Uterus (tissue), 4 donors: ENCODE measurements at regions of chr12 and their contacts with region 1.

Region 1: DNA sequence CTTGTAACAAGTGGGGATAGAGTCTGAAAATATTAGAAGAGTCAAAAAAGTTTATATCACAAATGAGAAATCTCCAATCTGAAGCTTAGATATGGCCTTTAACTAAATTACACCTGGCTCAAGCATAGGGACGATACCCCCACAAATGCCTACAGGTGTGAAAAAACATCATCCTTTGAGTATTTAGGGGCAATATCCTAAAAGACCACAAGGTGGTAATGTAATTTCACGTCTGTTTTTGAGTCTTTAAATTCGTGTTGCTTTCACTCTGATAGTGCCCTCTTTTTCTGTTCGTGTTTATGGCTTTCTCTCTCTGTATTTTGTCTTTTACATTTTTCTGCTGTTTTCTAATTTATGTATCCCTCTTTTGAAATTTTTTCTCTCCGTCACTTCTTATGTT is 84.3 kb downstream of the ETNK1 start:
- DNase-seq: no peak
- H3K4me3 ChIP-seq: no peak overlapping the region
- H3K27ac ChIP-seq: no peak overlapping the region
- H3K4me1 ChIP-seq: no peaks in the 10 kb centered on the region
- H3K27me3 ChIP-seq: no peaks in the 10 kb centered on the region
- CTCF ChIP-seq: peak in 3 of 4 experiments; percentile 9 to 34 (median 30)
- POLR2A ChIP-seq: no peak

Region 2: DNA sequence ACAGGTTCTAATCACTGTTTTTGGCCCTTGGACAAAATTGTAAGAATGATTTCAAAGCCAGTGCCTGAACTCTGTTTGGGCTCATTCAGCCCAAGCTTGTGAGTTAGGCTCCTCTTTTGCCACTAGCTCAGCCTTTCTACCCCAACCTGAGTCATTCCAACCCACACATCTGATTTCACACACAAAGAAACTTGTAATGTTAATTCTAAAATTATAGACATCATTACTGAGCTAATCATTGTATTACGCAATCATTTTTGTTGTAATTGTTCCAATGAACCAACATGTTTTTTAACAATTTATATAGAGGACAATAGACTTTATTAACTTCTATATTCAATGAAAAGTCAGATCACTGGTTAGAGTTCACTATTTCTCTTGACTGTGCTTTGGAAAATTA is 356.8 kb after region 1 on chr12:
- intact Hi-C with region 1: loop called (anchors 10 kb)
- DNase-seq: no peak
- H3K4me3 ChIP-seq: no peak overlapping the region
- H3K27ac ChIP-seq: no peak overlapping the region
- H3K4me1 ChIP-seq: no peaks in the 10 kb centered on the region
- H3K27me3 ChIP-seq: no peaks in the 10 kb centered on the region
- CTCF ChIP-seq: no peak
- POLR2A ChIP-seq: no peak

Region 3: DNA sequence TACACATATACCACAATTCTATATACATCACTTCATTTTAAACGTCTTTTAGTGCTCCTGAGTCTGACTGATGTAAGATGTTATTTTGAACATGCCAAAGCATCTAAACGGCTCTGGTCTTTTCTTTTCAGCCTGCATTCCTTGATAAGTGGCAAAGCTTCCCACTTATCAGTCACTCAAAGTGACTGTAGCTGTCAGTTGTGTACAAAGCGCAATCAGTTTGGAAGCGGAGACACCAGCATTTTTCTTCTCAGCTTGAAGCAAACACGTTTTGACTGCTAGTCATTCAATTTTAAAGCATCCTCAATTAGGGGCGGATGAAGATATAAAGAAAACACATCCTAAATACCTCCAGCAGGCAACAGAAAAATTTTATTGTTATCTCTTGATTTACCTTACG is 1013.4 kb after region 1 on chr12:
- intact Hi-C with region 1: no loop called
- DNase-seq: no peak
- H3K4me3 ChIP-seq: no peak overlapping the region
- H3K27ac ChIP-seq: no peak overlapping the region
- H3K4me1 ChIP-seq: no peaks in the 10 kb centered on the region
- H3K27me3 ChIP-seq: no peaks in the 10 kb centered on the region
- CTCF ChIP-seq: no peak
- POLR2A ChIP-seq: no peak